ENCODE measurements at regions of chr10 and their contacts with region 1.

Region 1: GRCh38 chr10:102072673-102073527 is 7.8 kb downstream of the HPS6 start:
- DNase-seq: peak; percentile 81
- H3K4me3 ChIP-seq: no peak overlapping the region
- H3K27ac ChIP-seq: no peak overlapping the region
- H3K4me1 ChIP-seq: no peaks in the 10 kb centered on the region
- H3K27me3 ChIP-seq: peaks cover 0 to 2% of the 10 kb centered on the region in 2 experiments
- CTCF ChIP-seq: peak; percentile 91 to 98
- POLR2A ChIP-seq: no peak

Region 2: DNA sequence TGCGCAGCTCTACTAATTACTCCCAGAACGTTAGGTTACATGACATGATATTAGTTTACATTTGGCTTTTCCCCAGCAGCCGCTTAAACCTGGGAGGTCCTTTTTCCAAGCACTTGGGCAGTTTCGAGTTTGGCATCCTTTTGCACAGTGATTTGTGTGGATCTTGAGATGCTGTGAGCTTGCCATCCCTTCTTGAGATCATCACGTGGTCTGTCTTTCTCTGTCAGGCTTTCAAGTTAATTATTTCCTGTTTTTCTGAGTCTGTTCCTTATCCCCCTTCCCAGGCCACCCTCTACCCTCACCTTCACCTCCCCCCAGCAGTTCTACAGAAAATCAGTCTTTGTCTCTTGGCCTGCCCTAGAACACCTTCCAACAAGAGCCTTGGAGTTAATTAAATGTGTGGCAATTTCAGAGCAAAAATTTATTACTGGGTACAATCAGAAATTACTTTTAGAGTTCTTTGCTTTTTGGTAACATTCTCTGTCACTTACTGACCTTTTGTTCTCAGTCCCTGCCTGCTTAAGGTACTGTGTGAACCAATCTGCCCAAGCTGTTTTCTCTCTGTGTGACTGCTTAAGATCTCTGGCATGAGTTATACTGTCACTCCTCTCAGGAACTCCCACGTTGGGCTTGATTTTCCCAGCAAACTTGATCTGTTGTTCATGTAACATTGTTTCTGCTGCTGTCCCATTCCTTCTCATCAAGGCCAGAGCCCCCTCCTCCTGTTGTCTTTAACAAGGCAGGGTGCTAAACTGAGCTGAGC is 1163.2 kb before region 1 on chr10:
- CTCF ChIA-PET with region 1: no interaction called
- POLR2A ChIA-PET with region 1: no interaction called
- dilution Hi-C with region 1: no loop called
- intact Hi-C with region 1: no loop called
- DNase-seq: peak; percentile 40
- H3K4me3 ChIP-seq: no peak overlapping the region
- H3K27ac ChIP-seq: no peak overlapping the region
- H3K4me1 ChIP-seq: peaks cover 27% of the 10 kb centered on the region
- H3K27me3 ChIP-seq: peaks cover 0 to 3% of the 10 kb centered on the region in 2 experiments
- CTCF ChIP-seq: no peak
- POLR2A ChIP-seq: no peak

Region 3: GRCh38 chr10:102085336-102085735 is 12.4 kb after region 1 on chr10:
- CTCF ChIA-PET with region 1: interaction called, 20 read pairs
- POLR2A ChIA-PET with region 1: interaction called, 3 read pairs
- dilution Hi-C with region 1: no loop called
- intact Hi-C with region 1: no loop called
- DNase-seq: no peak
- H3K4me3 ChIP-seq: no peak overlapping the region
- H3K27ac ChIP-seq: no peak overlapping the region
- H3K4me1 ChIP-seq: no peaks in the 10 kb centered on the region
- H3K27me3 ChIP-seq: no peaks in the 10 kb centered on the region
- CTCF ChIP-seq: no peak
- POLR2A ChIP-seq: no peak

Measured in endothelial cell of umbilical vein (primary cell).